AG04450 (cell line): ENCODE measurements at regions of chr5 and their contacts with region 1.

Region 1: GRCh38 chr5:137778772-137779564 is 24.8 kb upstream of the HNRNPA0 start:
- DNase-seq: no peak
- H3K4me3 ChIP-seq: no peak overlapping the region
- H3K27ac ChIP-seq: no peak overlapping the region
- H3K27me3 ChIP-seq: peaks cover 7% of the 10 kb centered on the region
- CTCF ChIP-seq: peak; percentile 81

Region 2: DNA sequence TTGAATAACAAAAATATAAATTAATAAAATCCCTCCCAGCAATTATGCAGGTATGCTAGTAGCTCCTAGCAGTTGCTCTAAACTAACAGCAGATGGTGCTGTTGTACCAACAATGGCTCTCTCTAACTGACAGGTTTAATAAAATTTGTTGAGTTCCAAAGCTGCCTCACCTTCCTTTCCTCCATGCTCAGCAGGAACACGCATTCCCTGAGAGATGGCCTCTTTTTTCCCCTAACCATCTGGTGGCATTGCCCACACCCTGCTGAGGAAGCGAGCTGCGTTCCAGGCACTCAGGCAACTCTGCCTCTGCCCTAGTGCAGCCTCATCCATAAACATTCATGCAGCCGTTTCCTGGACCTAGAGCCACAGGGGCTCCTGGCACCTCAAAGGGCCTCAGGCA is 149.3 kb before region 1 on chr5:
- CTCF ChIA-PET with region 1: interaction called, 21 read pairs
- POLR2A ChIA-PET with region 1: no interaction called
- DNase-seq: no peak
- H3K4me3 ChIP-seq: no peak overlapping the region
- H3K27ac ChIP-seq: no peak overlapping the region
- H3K27me3 ChIP-seq: no peaks in the 10 kb centered on the region
- CTCF ChIP-seq: peak; percentile 88

Region 3: DNA sequence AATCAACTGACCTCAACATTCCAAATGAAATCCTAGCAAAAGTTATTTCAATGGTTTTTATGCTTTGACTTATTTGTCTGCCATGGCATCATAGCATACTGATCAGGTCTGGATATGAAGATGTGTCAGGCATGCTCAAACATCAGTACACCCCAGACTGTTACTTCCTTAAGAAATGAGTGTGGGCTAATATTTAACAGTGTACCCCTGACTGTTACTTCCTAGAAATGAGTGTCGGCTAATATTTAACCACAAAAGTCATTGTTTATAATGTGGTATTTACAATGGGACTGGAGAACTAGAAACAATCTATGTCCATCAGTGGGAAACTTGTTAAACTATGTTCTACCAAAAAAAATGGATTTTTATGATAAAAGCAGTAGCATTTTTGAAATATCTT is 13.3 kb after region 1 on chr5:
- CTCF ChIA-PET with region 1: interaction called, 23 read pairs
- POLR2A ChIA-PET with region 1: no interaction called
- DNase-seq: no peak
- H3K4me3 ChIP-seq: no peak overlapping the region
- H3K27ac ChIP-seq: no peak overlapping the region
- H3K27me3 ChIP-seq: no peaks in the 10 kb centered on the region
- CTCF ChIP-seq: no peak

Region 4: DNA sequence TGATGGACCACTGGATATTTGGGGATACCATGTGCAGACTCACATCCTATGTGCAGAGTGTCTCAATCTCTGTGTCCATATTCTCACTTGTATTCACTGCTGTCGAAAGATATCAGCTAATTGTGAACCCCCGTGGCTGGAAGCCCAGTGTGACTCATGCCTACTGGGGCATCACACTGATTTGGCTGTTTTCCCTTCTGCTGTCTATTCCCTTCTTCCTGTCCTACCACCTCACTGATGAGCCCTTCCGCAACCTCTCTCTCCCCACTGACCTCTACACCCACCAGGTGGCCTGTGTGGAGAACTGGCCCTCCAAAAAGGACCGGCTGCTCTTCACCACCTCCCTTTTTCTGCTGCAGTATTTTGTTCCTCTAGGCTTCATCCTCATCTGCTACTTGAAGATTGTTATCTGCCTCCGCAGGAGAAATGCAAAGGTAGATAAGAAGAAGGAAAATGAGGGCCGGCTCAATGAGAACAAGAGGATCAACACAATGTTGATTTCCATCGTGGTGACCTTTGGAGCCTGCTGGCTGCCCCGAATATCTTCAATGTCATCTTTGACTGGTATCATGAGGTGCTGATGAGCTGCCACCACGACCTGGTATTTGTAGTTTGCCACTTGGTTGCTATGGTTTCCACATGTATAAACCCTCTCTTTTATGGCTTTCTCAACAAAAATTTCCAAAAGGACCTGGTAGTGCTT is 29.7 kb after region 1 on chr5:
- CTCF ChIA-PET with region 1: interaction called, 15 read pairs
- POLR2A ChIA-PET with region 1: no interaction called
- DNase-seq: no peak
- H3K4me3 ChIP-seq: no peak overlapping the region
- H3K27ac ChIP-seq: no peak overlapping the region
- H3K27me3 ChIP-seq: no peaks in the 10 kb centered on the region
- CTCF ChIP-seq: no peak

Region 5: GRCh38 chr5:137888857-137889759 is 110.1 kb after region 1 on chr5 and contains the start of gene PKD2L2:
- CTCF ChIA-PET with region 1: interaction called, 15 read pairs
- POLR2A ChIA-PET with region 1: no interaction called
- DNase-seq: peak; percentile 48
- H3K4me3 ChIP-seq: peak within 1 kb of the TSS; percentile 63
- H3K27ac ChIP-seq: peak within 1 kb of the TSS; percentile 52
- H3K27me3 ChIP-seq: no peaks in the 10 kb centered on the region
- CTCF ChIP-seq: no peak
- polyA plus RNA-seq, gene PKD2L2: 0.09 TPM in 1 of 2 replicates, not detected in the other

Region 6: GRCh38 chr5:138065102-138065501 is 286.1 kb after region 1 on chr5:
- CTCF ChIA-PET with region 1: interaction called, 39 read pairs
- POLR2A ChIA-PET with region 1: no interaction called
- DNase-seq: no peak
- H3K4me3 ChIP-seq: no peak overlapping the region
- H3K27ac ChIP-seq: no peak overlapping the region
- H3K27me3 ChIP-seq: peaks cover 4% of the 10 kb centered on the region
- CTCF ChIP-seq: peak; percentile 33

Region 7: DNA sequence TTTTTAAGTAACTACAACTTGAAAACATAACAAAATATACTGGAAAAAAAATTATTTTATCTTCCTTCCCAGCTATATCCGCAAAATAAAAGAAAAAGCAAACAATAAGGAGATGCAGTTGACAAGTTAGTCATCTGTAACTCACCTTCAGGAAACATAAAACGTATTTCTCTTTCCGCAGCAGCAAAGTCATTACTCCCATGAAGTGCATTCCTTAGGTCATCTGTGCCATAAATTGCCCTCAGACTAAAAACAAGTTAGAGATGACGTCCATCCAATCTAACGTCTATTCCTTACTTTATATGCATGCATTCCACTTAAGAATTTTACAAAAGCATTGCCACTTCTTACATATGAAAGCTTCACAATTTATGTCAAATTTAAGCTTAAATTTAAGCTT is 349.4 kb after region 1 on chr5:
- CTCF ChIA-PET with region 1: interaction called, 28 read pairs
- POLR2A ChIA-PET with region 1: no interaction called
- DNase-seq: no peak
- H3K4me3 ChIP-seq: no peak overlapping the region
- H3K27ac ChIP-seq: no peak overlapping the region
- H3K27me3 ChIP-seq: no peaks in the 10 kb centered on the region
- CTCF ChIP-seq: no peak